Activated CD8-positive, alpha-beta T cell treated with anti-CD3 and anti-CD28 coated beads, Interleukin-2, amount 10 ng/mL, durations not matched to agents 7 days and 5 days (primary cell): ENCODE measurements at regions of chr11 and their contacts with region 1.

Region 1: DNA sequence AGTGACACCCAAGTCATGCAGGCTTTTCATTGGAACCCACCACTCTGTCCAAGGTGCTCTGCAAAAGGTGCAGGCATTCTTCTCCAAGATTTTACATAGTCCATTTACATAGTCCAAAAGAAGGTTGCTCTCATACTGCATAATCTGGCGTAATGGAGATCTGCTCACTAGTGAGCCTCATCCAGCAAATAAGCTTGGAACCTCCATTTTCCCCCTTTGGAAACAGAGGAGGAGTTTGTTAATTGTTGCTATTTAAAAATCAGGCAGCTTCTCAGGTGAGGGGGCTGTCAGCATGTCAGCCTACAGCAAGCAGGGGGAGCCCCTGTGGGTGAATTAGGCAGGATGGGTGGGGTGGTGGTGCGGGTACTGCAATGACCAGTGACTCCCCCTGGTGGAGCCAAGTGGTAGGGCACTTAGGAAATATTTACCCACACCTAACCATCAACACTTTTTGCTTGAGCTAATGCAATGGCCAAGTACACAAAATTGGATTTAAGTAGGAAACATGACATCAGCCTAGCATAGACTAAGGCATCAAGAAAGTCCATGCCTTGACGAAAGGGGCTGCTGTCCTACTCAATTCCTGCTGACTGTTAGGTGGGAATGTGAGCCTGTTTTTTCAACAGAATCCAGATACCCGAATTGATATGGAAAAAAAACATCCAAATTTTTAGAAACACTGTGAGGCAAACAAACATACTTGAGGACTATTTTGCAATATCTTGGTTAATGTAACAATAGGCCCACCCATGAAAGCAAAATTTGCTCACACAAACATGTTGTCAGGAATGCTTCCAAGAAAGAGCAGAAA is 64.5 kb downstream of the AMBRA1 start:
- DNase-seq: peak; percentile 85
- ATAC-seq: peak; percentile 92
- H3K4me3 Mint-ChIP-seq: no peak overlapping the region
- H3K27ac Mint-ChIP-seq: no peak overlapping the region
- H3K4me1 Mint-ChIP-seq: peaks cover 17% of the 10 kb centered on the region
- H3K27me3 Mint-ChIP-seq: no peaks in the 10 kb centered on the region

Region 2: GRCh38 chr11:46392421-46393230 is 136.7 kb before region 1 on chr11:
- CTCF ChIA-PET with region 1: interaction called, 12 read pairs
- POLR2A ChIA-PET with region 1: no interaction called
- DNase-seq: peak; percentile 86
- ATAC-seq: peak; percentile 85
- H3K4me3 Mint-ChIP-seq: peak overlapping the region; percentile 66
- H3K27ac Mint-ChIP-seq: no peak overlapping the region
- H3K4me1 Mint-ChIP-seq: peaks cover 28% of the 10 kb centered on the region
- H3K27me3 Mint-ChIP-seq: peaks cover 43% of the 10 kb centered on the region

Region 3: DNA sequence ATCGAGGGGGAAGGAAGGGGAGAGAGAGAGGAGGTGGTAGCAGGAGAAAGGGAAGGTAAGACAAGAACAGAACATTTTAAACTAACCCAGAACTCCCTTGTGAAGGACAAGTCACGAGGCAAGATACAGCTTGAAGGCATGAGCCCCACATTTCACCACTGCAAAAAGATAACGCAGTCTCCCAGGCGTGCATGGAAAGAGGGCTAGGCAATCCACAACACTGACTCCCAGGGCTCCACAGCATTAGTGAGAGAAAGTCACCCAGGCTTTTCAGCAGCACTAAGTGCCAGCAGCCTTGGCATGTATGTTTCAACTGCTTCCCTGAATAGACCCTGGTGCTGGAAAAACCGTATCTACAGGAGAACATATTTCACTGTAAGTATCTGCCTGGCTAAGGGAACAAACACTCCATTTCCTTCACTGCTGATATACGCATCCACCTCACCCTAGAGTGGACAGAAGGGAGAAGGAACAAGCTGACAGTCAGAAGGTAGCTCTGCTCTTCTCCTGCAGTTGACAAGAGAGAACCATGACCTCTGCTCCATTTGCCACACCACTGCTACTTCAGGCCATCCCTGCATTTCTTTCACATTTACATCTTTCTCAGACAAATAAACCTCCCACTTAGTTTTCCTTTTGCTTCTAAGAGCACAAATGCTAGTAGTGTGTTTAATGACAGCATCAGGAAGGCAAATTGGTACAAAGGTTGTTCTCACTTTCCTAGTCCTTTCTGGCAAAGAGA is 23.4 kb before region 1 on chr11:
- CTCF ChIA-PET with region 1: interaction called, 12 read pairs
- POLR2A ChIA-PET with region 1: no interaction called
- DNase-seq: no peak
- ATAC-seq: no peak
- H3K4me3 Mint-ChIP-seq: no peak overlapping the region
- H3K27ac Mint-ChIP-seq: no peak overlapping the region
- H3K4me1 Mint-ChIP-seq: peaks cover 8% of the 10 kb centered on the region
- H3K27me3 Mint-ChIP-seq: no peaks in the 10 kb centered on the region